Posterior cingulate gyrus (tissue), 11 donors: ENCODE measurements at regions of chr20 and their contacts with region 1.

Region 1: DNA sequence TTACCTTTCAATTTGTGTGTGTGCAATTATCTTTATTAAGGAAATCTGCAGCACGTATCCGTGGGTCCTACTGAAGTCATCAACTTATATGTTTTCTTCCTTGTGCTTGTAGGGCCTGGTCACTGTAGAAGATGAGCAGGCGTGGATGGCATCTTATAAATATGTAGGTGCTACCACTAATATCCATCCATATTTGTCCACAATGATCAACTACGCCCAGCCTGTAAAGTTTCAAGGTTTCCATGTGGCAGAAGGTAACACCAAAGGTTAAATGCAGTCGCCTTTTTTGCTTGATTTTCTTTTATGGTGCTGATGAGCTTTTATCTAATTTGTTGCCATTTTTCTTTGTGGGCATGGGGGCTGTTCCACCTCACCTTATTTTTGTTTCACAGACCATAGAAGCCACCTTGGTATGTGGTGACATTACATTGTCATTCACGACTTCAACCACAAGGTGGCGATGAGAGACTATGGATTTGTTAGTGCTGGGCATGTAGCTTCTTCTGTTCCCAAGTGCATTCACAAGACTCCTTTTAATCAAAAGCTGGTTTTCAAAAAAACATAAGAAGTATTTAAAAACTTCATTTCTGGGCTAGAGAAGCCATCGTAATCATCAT is 106.5 kb upstream of the LAMP5 start:
- DNase-seq: peak in 4 of 10 donors; percentile 65 to 75 (median 70)

Region 2: DNA sequence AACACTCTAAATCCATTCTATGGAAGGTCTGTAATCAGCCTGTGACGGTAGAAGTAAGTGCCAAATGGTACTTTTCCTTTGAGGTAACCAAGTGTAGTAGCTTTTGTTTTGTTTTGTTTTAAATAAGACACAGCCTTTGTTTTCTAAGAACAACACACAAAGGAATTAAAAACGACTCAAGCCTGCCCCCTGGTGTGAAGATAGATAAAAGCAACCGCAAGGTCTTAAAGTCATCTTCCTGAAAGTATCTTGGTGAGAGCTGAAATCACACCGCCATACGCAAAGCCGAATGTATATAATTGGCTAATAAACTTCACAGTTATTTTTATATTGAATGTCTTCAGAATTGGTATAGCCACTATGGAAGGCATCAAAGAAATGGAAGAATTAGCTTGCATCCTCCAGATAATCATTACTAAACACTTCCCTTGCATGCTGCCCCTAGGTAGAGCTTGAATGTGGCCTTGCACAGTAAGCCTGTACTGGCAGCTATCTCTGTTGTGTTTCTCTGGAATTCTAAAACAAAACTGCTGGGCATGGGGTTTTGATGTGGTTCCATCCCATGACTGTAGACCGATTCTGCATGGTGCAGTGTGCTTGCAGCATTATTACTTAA is 202.1 kb after region 1 on chr20:
- intact Hi-C with region 1: loop called (anchors 1 kb)
- DNase-seq: peak in 5 of 10 donors; percentile 24 to 74 (median 71)

Region 3: DNA sequence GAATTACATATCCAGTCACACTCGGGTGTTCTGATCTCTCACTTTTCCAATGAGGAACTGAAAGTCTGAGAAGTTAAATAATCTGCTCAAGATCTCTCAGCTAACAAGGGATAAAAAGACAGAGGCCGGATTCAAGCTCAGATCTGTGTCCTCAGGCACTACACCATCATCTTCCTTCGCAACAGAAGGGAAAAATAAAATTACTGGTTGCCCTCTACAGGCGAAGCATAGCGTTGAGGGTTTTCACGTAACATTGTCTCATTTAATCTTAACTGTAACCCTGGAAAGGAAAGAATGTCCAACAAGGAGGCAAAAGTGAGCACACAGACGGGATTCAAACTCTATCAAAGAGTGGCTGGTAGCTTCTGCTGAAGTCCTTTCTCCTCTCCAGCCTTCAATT is 559.1 kb after region 1 on chr20:
- intact Hi-C with region 1: loop called (anchors 10 kb)
- DNase-seq: no peak